Heart left ventricle (tissue), 16 donors: ENCODE measurements at regions of chr12 and their contacts with region 1.

Region 1: GRCh38 chr12:2583091-2583497 is 211.7 kb upstream of the FKBP4 start:
- DNase-seq: peak; percentile 63 to 89 (median 70)
- ATAC-seq: peak; percentile 65 to 89 (median 84)
- H3K4me3 ChIP-seq: peak overlapping the region in 5 of 12 donors; percentile 4 to 20 (median 11)
- H3K27ac ChIP-seq: peak overlapping the region in 7 of 12 donors; percentile 24 to 76 (median 48)
- H3K4me1 ChIP-seq: peaks cover 0 to 18% (median 11%) of the 10 kb centered on the region in 12 donors
- H3K27me3 ChIP-seq: peaks cover 0 to 6% (median 0%) of the 10 kb centered on the region in 9 donors
- CTCF ChIP-seq: peak; percentile 80 to 96 (median 91)
- POLR2A ChIP-seq: no peak

Region 2: DNA sequence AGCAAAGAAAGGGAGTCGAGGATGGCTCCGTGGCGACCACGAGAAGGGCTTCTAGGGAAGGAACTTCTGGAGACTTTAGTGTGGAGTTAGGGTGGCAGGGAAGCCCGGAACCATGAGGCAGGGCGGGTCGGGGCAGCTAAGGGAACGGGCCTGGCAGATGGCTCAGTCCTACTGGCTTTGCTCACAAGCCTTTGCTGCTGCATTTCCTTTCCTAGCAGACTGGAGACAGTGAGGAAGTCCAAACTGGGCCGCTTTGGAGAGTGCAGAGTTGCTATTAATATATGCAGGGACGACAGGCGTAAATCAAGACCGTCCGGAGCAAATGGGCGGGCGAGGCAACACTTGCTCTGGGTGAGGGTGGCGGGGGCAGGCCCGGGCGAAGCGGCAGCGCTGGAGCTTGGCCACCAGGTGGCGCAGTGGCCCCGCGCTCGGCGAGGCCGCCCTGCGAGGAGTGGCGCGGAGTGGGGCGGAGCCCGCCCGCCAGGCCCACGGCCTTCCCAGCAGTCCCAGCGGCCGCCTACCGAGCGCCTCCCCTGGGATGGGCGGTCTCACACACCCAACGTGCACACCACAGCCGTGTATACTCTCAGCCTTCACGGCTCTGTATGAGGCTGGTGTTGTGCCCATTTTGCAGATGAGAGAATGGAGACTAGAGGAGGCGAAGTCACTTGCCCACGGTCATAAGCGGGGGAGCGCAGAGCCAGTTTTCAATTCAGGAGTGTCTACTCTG is 787.1 kb before region 1 on chr12:
- intact Hi-C with region 1: loop called in 3 of 10 experiments (anchors 2 to 5 kb)
- DNase-seq: peak; percentile 92 to 98 (median 96)
- ATAC-seq: peak; percentile 92 to 96 (median 94)
- H3K4me3 ChIP-seq: peak overlapping the region; percentile 47 to 79 (median 64)
- H3K27ac ChIP-seq: peak overlapping the region; percentile 49 to 95 (median 84)
- H3K4me1 ChIP-seq: peaks cover 8 to 46% (median 26%) of the 10 kb centered on the region in 12 donors
- H3K27me3 ChIP-seq: no peaks in the 10 kb centered on the region
- CTCF ChIP-seq: peak; percentile 92 to 100 (median 99)
- POLR2A ChIP-seq: peak in 1 of 2 donors; percentile 70

Region 3: GRCh38 chr12:2064071-2064507 is 519.0 kb before region 1 on chr12:
- intact Hi-C with region 1: loop called in 5 of 10 experiments (anchors 5 to 10 kb)
- DNase-seq: no peak
- ATAC-seq: peak in 3 of 4 donors; percentile 28 to 44 (median 30)
- H3K4me3 ChIP-seq: peak overlapping the region in 6 of 12 donors; percentile 1 to 37 (median 18)
- H3K27ac ChIP-seq: peak overlapping the region in 11 of 12 donors; percentile 18 to 91 (median 62)
- H3K4me1 ChIP-seq: peaks cover 0 to 77% (median 32%) of the 10 kb centered on the region in 12 donors
- H3K27me3 ChIP-seq: no peaks in the 10 kb centered on the region
- CTCF ChIP-seq: no peak
- POLR2A ChIP-seq: no peak

Region 4: GRCh38 chr12:2358986-2359658 is 224.0 kb before region 1 on chr12:
- intact Hi-C with region 1: loop called in 1 of 10 experiments (anchors 2 kb)
- DNase-seq: peak in 1 of 5 donors; percentile 16
- ATAC-seq: peak in 2 of 4 donors; percentile 33 to 39
- H3K4me3 ChIP-seq: no peak overlapping the region
- H3K27ac ChIP-seq: peak overlapping the region in 11 of 12 donors; percentile 16 to 78 (median 54)
- H3K4me1 ChIP-seq: peaks cover 0 to 77% (median 41%) of the 10 kb centered on the region in 12 donors
- H3K27me3 ChIP-seq: no peaks in the 10 kb centered on the region
- CTCF ChIP-seq: peak in 3 of 12 donors; percentile 7 to 32 (median 25)
- POLR2A ChIP-seq: no peak

Region 5: GRCh38 chr12:2395354-2395977 is 187.6 kb before region 1 on chr12:
- intact Hi-C with region 1: loop called in 1 of 10 experiments (anchors 10 kb)
- DNase-seq: peak in 4 of 5 donors; percentile 42 to 73 (median 50)
- ATAC-seq: no peak
- H3K4me3 ChIP-seq: no peak overlapping the region
- H3K27ac ChIP-seq: peak overlapping the region in 11 of 12 donors; percentile 12 to 77 (median 47)
- H3K4me1 ChIP-seq: peaks cover 3 to 65% (median 30%) of the 10 kb centered on the region in 12 donors
- H3K27me3 ChIP-seq: no peaks in the 10 kb centered on the region
- CTCF ChIP-seq: peak; percentile 65 to 86 (median 78)
- POLR2A ChIP-seq: no peak

Region 6: DNA sequence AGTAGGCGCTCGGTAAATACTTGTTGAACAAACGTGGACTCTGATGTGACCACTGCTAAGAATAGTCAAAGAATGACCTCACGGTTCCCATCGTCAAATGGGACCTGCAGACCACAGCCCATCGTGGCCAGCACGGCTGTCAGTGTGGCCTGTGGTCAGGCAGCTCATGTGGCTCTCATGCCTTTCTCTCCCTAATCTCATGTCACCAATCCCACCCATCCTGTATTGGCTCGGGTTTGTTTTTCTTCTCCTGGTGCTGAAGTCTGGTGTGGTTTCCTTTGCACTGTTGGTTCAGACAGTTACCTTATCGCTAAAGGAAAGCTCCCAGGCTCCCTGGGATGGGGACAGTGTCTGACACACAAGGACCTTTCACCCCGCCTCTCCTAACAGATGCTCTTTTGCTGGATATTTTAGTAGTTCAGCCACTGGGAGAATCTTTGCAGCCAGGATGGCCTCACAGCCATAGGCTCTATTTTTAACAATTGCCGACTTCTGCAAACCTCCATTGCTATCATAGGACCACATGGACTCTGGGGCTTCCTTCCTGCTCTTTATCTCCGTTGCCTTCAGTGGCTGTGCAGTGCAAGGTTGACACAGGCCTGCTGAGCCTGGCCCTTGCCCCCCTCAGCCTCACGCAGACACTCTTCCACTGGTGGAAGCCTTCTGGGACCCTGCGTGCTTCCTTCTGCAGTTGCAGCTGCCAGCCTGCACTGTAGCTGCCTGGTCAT is 81.5 kb before region 1 on chr12:
- intact Hi-C with region 1: loop called in 1 of 10 experiments (anchors 5 kb)
- DNase-seq: peak in 4 of 5 donors; percentile 52 to 70 (median 62)
- ATAC-seq: peak; percentile 63 to 83 (median 68)
- H3K4me3 ChIP-seq: no peak overlapping the region
- H3K27ac ChIP-seq: peak overlapping the region; percentile 18 to 93 (median 80)
- H3K4me1 ChIP-seq: peaks cover 10 to 63% (median 43%) of the 10 kb centered on the region in 12 donors
- H3K27me3 ChIP-seq: no peaks in the 10 kb centered on the region
- CTCF ChIP-seq: no peak
- POLR2A ChIP-seq: no peak